Transverse colon (tissue), 4 donors: ENCODE measurements at regions of chr10 and their contacts with region 1.

Region 1: DNA sequence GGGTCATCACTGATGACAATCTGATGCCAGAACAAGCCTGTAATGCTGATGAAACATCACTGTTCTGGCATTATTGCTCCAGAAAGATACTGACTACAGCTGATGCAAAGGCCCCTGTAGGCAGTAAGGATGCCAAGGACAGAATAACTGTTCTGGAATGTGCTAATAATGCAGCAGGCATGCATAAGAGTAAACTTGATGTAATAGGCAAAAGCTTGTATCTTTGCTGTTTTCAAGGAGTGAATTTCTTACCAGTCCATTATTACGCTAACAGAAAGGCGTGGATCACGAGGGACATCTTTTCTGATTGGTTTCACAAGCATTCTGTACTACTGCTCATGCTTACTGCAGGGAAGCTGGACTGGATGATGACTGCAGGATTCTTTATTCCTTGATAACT is 18.7 kb downstream of the LCOR start:
- DNase-seq: no peak
- H3K4me3 ChIP-seq: no peak overlapping the region
- H3K27ac ChIP-seq: peak overlapping the region in 3 of 4 donors; percentile 38 to 57 (median 52)
- H3K4me1 ChIP-seq: peaks cover 6 to 18% (median 8%) of the 10 kb centered on the region in 4 donors
- H3K27me3 ChIP-seq: no peaks in the 10 kb centered on the region
- CTCF ChIP-seq: no peak
- EP300 ChIP-seq: no peak
- POLR2A ChIP-seq: no peak

Region 2: DNA sequence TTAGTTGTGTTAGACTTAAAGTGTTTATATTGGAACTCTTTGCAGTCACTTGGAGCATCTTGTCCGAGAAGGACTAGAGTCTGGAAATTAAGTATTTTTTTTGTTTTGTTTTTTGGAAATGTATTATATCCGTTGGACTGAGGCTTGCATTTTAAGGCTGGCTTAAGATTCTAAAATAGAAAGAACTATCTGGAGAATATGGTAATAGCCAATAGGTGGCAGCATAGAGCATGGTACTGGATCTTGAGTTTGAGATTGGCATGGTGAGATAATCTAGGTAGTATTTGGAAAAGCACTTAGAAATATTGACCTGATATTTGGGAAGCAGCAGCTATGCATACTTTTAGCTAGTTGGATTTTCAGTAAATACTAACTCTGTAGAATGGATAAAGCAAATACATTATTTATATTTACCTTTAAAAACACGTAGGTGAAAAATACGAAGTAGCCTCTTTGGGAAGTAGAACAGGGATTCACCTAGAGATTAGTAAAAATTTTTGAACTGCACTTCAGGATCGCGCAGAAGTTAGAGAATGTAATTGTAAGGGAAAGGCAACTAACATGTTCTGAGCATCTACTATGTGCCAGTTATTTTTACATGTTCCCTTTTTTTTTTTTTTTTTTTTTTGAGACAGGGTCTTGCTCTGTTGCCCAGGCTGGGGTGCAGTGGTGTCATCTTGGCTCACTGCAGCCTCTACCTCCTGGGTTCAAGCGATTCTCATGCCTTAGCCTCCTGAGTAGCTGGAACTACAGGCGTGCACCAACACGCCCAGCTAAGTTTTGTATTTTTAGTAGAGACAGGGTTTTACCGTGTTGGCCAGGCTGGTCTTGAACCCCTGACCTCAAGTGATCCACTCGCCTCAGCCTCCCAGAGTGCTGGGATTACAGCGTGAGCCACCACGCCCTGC is 59.9 kb after region 1 on chr10:
- in situ Hi-C with region 1: loop called in 1 of 4 experiments (anchors 10 kb)
- intact Hi-C with region 1: no loop called
- DNase-seq: no peak
- H3K4me3 ChIP-seq: no peak overlapping the region
- H3K27ac ChIP-seq: no peak overlapping the region
- H3K4me1 ChIP-seq: peaks cover 0 to 20% (median 6%) of the 10 kb centered on the region in 4 donors
- H3K27me3 ChIP-seq: no peaks in the 10 kb centered on the region
- CTCF ChIP-seq: peak; percentile 46 to 64 (median 61)
- EP300 ChIP-seq: no peak
- POLR2A ChIP-seq: no peak